ENCODE measurements at regions of chr2 and their contacts with region 1.

Region 1: DNA sequence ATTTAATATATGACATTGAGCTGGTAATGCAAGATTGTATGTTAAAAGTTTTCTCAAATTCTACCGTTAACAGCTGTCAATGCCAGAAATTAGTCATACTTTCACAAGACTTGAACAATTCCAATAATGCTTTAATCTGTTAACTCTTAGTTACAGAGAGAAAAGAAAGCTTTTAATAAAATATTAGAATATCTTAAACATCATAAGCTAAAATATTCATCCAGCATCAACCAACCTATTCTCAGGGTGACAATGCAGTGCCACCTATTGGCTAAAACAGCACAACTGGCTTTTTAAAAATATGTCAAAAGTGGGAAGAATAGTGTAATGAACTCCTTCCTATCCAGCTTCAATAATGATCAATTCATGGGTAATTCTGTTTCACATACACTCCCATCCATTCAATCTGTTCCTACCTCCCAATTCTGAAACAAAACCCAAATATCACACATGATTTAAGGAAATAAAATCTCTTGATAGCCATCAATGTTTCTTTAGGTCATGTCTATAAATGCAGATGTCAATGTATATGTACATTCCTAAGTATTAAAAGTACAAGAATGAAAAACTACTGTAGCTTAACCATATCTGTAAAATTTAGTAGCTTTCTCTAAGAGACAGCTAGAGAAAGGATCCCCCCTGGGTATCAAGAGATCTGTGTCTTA is 79.8 kb upstream of the CCDC141 start:
- DNase-seq: peak; percentile 12
- ATAC-seq: no peak
- H3K4me3 Mint-ChIP-seq: no peak overlapping the region
- H3K27ac Mint-ChIP-seq: no peak overlapping the region
- H3K4me1 Mint-ChIP-seq: no peaks in the 10 kb centered on the region
- H3K27me3 Mint-ChIP-seq: no peaks in the 10 kb centered on the region

Region 2: GRCh38 chr2:178397002-178397605 is 732.6 kb before region 1 on chr2:
- CTCF ChIA-PET with region 1: no interaction called
- POLR2A ChIA-PET with region 1: no interaction called
- intact Hi-C with region 1: loop called in 1 of 2 experiments (anchors 5 kb)
- DNase-seq: no peak
- ATAC-seq: peak; percentile 65
- H3K4me3 Mint-ChIP-seq: no peak overlapping the region
- H3K27ac Mint-ChIP-seq: no peak overlapping the region
- H3K4me1 Mint-ChIP-seq: no peaks in the 10 kb centered on the region
- H3K27me3 Mint-ChIP-seq: no peaks in the 10 kb centered on the region

Region 3: DNA sequence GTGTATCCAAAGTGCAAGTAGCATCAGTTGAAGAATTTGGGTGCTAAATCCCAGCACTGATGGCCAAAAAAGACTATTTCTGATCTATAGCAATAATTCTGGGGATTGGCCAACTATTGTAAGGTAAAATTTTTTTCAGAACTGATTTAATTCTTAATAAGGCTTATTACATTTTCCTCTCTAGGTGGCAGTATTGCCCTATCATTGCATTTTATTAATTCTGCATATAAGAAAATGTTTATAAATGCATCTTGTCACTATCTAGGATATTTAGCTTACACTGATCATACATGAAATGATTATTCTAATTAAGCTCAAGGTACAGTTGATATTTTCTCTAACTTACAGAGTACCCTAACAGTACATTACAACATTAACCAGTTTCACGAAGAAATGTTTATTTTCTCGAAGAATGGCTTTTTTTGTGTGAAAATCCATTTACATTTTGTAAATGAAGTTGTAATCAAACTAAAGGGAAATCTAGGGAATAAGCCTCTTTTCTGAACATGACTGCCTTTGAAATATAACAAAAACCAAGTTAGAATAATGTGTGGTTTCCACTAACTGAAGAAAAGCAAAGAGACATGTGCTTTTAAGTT is 333.5 kb before region 1 on chr2:
- CTCF ChIA-PET with region 1: no interaction called
- POLR2A ChIA-PET with region 1: no interaction called
- intact Hi-C with region 1: loop called in 1 of 2 experiments (anchors 1 kb)
- DNase-seq: no peak
- ATAC-seq: no peak
- H3K4me3 Mint-ChIP-seq: no peak overlapping the region
- H3K27ac Mint-ChIP-seq: no peak overlapping the region
- H3K4me1 Mint-ChIP-seq: no peaks in the 10 kb centered on the region
- H3K27me3 Mint-ChIP-seq: no peaks in the 10 kb centered on the region

Region 4: DNA sequence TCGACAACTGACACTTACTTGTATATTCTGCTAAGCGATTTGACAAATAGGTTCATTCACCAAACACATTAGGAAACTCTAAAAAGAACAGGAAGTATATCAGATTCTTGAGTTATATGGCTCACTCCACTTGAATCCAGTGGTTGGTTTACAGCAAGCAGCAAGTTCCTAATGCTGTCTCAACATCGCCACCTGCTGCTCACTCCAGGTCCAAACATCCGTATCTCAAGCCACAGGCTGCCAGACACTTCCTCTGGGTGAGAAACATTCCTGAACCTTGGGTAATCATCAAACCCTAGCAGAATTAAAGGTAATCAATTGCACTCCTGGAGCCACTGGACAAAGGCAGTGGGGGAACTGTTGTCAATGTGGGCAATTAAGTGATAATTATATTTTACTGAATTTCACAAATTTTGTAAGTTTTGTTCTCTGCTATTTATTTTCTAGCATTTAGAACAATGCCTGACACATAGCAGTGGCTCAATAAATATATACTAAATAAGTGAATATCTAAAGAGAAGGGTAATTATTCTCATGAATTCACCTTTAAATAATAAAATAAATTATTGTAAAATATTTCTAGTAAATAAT is 215.4 kb before region 1 on chr2:
- CTCF ChIA-PET with region 1: interaction called, 5 read pairs
- POLR2A ChIA-PET with region 1: no interaction called
- intact Hi-C with region 1: loop called in 1 of 2 experiments (anchors 5 kb)
- DNase-seq: peak; percentile 87
- ATAC-seq: peak; percentile 85
- H3K4me3 Mint-ChIP-seq: no peak overlapping the region
- H3K27ac Mint-ChIP-seq: no peak overlapping the region
- H3K4me1 Mint-ChIP-seq: peaks cover 7% of the 10 kb centered on the region
- H3K27me3 Mint-ChIP-seq: no peaks in the 10 kb centered on the region

Region 5: GRCh38 chr2:178976351-178976750 is 153.4 kb before region 1 on chr2:
- CTCF ChIA-PET with region 1: interaction called, 3 read pairs
- POLR2A ChIA-PET with region 1: no interaction called
- intact Hi-C with region 1: loop called in 1 of 2 experiments (anchors 5 kb)
- DNase-seq: no peak
- ATAC-seq: no peak
- H3K4me3 Mint-ChIP-seq: no peak overlapping the region
- H3K27ac Mint-ChIP-seq: no peak overlapping the region
- H3K4me1 Mint-ChIP-seq: no peaks in the 10 kb centered on the region
- H3K27me3 Mint-ChIP-seq: no peaks in the 10 kb centered on the region

Measured in activated CD4-positive, alpha-beta T cell treated with anti-CD3 and anti-CD28 coated beads for 36 hours (primary cell).